ENCODE measurements at regions of chr11 and their contacts with region 1.

Region 1: DNA sequence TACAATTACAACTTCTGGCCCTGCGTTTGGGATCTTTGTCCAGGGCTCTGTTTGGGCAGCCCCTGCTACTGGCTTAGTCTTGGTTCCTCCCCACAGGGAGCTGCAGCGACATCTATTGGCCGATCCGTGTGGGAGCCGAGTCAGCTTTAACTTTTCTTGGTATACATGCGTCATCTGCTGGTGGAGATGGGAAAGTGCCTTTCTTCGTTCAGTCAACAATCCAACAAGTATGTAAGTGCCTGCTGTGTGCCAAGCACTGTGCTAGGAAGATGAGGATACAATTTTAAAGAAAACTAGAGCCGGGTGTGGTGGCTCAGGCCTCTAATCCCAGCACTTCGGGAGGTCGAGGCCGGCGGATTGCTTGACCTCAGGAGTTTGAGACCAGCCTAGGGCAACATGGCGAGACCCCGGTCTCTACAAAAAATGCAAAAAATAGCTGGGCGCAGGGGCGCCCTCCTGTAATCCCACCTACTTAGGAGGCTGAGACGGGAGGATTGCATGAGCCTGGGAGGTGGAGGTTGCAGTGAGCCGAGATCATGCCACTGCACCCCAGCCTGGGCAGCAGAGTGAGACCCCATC is 8.2 kb downstream of the TPBGL start:
- DNase-seq: peak; percentile 96
- H3K4me3 ChIP-seq: no peak overlapping the region
- H3K27ac ChIP-seq: no peak overlapping the region
- H3K4me1 ChIP-seq: peaks cover 0 to 7% (median 2%) of the 10 kb centered on the region in 4 donors
- H3K27me3 ChIP-seq: peaks cover 0 to 55% (median 2%) of the 10 kb centered on the region in 4 donors
- CTCF ChIP-seq: peak; percentile 98 to 100 (median 99)
- EP300 ChIP-seq: no peak
- POLR2A ChIP-seq: no peak

Region 2: GRCh38 chr11:75022759-75023396 is 225.9 kb before region 1 on chr11:
- intact Hi-C with region 1: loop called (anchors 2 kb)
- DNase-seq: no peak
- H3K4me3 ChIP-seq: no peak overlapping the region
- H3K27ac ChIP-seq: no peak overlapping the region
- H3K4me1 ChIP-seq: peaks cover 0 to 7% (median 4%) of the 10 kb centered on the region in 4 donors
- H3K27me3 ChIP-seq: no peaks in the 10 kb centered on the region
- CTCF ChIP-seq: peak; percentile 87 to 99 (median 91)
- EP300 ChIP-seq: no peak
- POLR2A ChIP-seq: no peak

Region 3: DNA sequence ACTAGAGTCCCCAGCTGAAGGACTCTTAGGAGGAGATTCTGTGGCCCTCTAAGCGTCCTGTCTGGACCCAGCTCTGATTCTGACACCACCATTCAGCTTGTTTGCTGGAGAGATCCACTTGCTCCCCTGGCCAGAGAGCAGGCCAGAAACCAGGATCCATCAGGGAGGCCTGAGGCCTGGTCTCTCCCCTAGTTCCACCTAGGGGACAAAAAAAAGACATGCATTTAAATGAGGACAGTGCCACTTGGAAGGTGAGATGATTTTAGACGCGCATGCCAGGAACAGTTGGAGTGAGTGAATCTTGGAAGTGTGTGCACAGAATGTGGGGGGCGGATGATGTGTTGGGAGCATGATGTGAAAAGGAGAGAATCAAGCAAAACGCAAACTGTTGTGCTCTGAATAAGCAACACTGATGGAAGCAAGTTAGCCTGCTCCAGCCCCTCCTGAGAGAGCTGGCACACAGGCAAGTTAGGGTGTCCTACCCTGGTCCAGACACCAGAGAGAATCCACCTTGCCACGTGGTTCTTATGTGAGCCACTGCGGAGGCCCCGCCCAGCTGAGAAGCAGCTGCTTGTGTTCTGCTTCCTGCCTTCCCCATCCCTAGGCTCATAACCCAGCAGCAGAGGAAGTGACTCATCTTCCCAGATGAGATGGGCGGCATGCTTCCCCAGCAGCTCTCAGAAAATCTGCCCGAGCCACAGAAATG is 105.9 kb before region 1 on chr11:
- intact Hi-C with region 1: loop called (anchors 1 kb)
- DNase-seq: peak; percentile 94
- H3K4me3 ChIP-seq: no peak overlapping the region
- H3K27ac ChIP-seq: no peak overlapping the region
- H3K4me1 ChIP-seq: peaks cover 15 to 33% (median 25%) of the 10 kb centered on the region in 4 donors
- H3K27me3 ChIP-seq: peaks cover 0 to 22% (median 0%) of the 10 kb centered on the region in 4 donors
- CTCF ChIP-seq: no peak
- EP300 ChIP-seq: no peak
- POLR2A ChIP-seq: no peak

Region 4: DNA sequence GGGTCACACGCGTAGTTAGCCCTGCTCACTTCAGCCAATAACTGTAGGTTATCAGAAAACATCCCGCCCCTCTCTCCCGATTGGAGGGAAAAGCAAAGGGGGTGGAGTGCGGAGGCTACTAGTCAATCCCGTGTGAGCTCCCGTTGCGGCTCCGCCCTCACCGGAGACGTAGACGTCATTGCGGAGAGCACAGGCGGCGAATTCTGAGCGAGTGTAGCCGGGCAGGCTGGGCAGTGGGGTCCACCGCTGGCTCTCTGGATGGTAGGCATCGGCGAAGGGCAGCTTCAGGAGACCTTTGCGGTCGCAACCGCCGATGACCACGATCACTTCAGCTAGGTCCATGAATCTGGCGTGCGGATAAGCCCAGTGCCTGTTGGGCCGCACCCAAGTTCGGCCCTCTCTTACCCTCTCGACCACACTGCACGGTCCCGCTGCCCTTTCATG is 179.5 kb after region 1 on chr11:
- intact Hi-C with region 1: no loop called
- DNase-seq: peak; percentile 97
- H3K4me3 ChIP-seq: peak overlapping the region; percentile 42 to 61 (median 55)
- H3K27ac ChIP-seq: peak overlapping the region in 2 of 4 donors; percentile 63 to 64
- H3K4me1 ChIP-seq: peaks cover 10 to 41% (median 30%) of the 10 kb centered on the region in 4 donors
- H3K27me3 ChIP-seq: peaks cover 0 to 51% (median 16%) of the 10 kb centered on the region in 4 donors
- CTCF ChIP-seq: no peak
- EP300 ChIP-seq: no peak
- POLR2A ChIP-seq: no peak